Esophagus squamous epithelium (tissue), 5 donors: ENCODE measurements at regions of chr7 and their contacts with region 1.

Region 1: DNA sequence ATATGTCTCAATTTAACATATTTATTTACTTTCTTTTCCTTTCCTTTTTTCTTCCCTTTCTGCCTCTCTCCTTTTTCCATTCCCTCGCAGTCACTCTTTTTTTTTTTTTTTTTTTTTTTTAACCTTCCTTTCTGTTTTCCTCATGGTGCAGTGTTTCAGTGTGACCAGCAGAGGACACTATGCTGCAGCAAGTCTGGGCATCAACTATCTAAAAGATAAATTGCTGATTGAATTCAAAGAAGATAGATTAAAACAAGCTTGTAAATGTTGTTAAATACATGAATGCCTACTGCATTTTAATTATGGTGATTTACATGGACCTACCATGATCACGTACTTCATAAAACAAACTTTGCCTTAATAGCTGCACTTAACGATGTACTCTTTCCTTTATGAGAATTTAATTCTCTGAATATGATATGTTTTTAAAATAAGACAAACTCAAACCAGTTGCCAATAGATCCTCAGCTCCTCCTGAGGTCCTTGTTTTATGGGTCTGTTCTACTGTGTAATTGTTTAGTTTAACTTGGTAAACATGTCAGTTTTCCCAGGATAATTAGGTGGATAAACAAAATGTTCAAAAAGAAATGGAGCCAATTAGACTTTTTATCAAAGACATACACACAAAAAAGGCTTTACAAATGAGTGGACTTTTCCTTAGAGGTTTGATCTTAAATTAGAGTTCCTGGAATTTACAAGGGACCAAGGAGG is 101.0 kb upstream of the AGR3 start:
- DNase-seq: no peak
- H3K4me3 ChIP-seq: peak overlapping the region in 1 of 4 donors; percentile 13
- H3K27ac ChIP-seq: peak overlapping the region in 3 of 4 donors; percentile 3 to 28 (median 27)
- H3K4me1 ChIP-seq: peaks cover 7 to 42% (median 11%) of the 10 kb centered on the region in 3 donors
- H3K27me3 ChIP-seq: no peaks in the 10 kb centered on the region
- CTCF ChIP-seq: peak; percentile 57 to 92 (median 83)
- POLR2A ChIP-seq: no peak

Region 2: GRCh38 chr7:16926283-16926682 is 56.5 kb before region 1 on chr7:
- intact Hi-C with region 1: no loop called
- DNase-seq: no peak
- H3K4me3 ChIP-seq: peak overlapping the region in 1 of 4 donors; percentile 16
- H3K27ac ChIP-seq: no peak overlapping the region
- H3K4me1 ChIP-seq: peaks cover 0 to 38% (median 0%) of the 10 kb centered on the region in 3 donors
- H3K27me3 ChIP-seq: no peaks in the 10 kb centered on the region
- CTCF ChIP-seq: peak; percentile 16 to 70 (median 50)
- POLR2A ChIP-seq: no peak

Region 3: DNA sequence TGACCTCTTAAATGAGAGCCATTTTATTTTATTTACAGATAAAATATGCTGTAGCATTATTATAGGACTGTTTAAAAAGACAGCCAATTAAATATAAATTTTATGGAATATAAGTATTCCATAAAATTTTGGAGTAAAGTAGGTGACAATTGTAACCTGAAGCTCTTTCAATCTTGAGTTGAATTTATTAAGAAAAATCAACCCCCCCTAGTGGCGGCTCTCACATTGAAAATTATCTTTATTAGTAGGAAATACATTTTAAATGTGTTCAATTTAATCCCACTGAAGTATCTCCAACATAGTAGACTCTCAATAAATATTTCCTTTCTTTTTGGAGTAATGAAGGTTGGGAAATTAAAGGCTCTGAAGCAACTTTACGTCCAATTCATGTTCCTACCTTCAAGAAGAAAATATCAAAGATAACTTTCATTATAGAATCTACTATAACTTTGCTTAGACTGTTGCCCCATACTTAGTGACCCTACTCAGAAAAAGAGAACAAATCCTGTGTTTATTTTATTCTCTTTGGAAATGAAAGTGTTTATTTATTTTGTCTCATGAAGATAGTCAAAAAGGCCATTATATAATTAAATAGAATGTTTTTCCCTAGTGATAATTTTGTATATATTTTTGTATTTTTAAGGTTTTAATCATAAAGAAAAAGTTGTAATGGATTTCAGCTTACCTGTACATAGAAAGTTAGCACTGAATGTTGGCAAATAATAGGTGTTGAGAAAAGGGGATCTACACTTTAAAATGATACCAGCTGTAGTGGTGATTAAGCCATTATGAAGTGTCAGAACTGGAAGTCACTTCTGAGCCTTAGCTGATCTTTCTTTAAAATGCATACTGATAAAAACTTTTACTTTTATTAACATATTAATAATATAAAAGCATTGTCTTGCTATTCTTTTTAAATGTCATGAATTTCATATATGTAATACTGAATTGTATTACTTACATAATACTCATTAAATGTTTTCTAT is 319.0 kb after region 1 on chr7:
- intact Hi-C with region 1: loop called (anchors 10 kb)
- DNase-seq: no peak
- H3K4me3 ChIP-seq: peak overlapping the region; percentile 74 to 100 (median 90)
- H3K27ac ChIP-seq: peak overlapping the region; percentile 25 to 97 (median 76)
- H3K4me1 ChIP-seq: peaks cover 19 to 69% (median 33%) of the 10 kb centered on the region in 3 donors
- H3K27me3 ChIP-seq: no peaks in the 10 kb centered on the region
- CTCF ChIP-seq: peak; percentile 53 to 78 (median 70)
- POLR2A ChIP-seq: no peak